CD4-positive, alpha-beta T cell (primary cell): ENCODE measurements at regions of chr16 and their contacts with region 1.

Region 1: GRCh38 chr16:58129097-58129936 is at the start of gene CFAP20:
- DNase-seq: peak; percentile 92 to 98 (median 96)
- ATAC-seq: peak; percentile 84
- H3K4me3 ChIP-seq: peak within 1 kb of the TSS; percentile 99
- H3K4me3 Mint-ChIP-seq: peak within 1 kb of the TSS; percentile 91
- H3K27ac ChIP-seq: peak within 1 kb of the TSS; percentile 84 to 88
- H3K27ac Mint-ChIP-seq: peak within 1 kb of the TSS; percentile 88
- H3K4me1 ChIP-seq: peaks cover 40% of the 10 kb centered on the region
- H3K4me1 Mint-ChIP-seq: peaks cover 47% of the 10 kb centered on the region
- H3K27me3 ChIP-seq: no peaks in the 10 kb centered on the region
- H3K27me3 Mint-ChIP-seq: no peaks in the 10 kb centered on the region
- CTCF ChIP-seq: no peak
- total RNA-seq, gene CFAP20: 250 to 261 TPM

Region 2: DNA sequence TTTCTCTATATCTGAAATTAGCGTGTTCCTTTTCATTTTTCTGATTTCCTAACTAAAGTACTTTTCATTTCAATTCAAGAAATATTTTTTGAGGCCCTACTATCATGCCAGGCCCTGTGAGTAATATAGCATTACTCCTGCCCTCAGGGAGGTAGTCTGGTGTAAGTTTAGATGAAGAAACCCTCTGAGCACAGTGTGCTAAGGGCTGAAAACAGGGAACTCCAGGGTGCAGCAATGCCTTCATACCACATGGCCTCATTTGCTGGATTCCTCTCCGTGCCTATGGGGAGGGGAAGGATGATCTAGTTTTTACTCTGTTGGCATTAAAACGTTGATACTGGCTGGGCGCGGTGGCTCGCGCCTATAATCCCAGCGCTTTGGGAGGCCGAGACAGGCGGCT is 677.3 kb before region 1 on chr16:
- CTCF ChIA-PET with region 1: no interaction called
- POLR2A ChIA-PET with region 1: no interaction called
- intact Hi-C with region 1: no loop called
- DNase-seq: no peak
- ATAC-seq: no peak
- H3K4me3 ChIP-seq: no peak overlapping the region
- H3K4me3 Mint-ChIP-seq: no peak overlapping the region
- H3K27ac ChIP-seq: no peak overlapping the region
- H3K27ac Mint-ChIP-seq: no peak overlapping the region
- H3K4me1 ChIP-seq: peaks cover 10% of the 10 kb centered on the region
- H3K4me1 Mint-ChIP-seq: peaks cover 14% of the 10 kb centered on the region
- H3K27me3 ChIP-seq: no peaks in the 10 kb centered on the region
- H3K27me3 Mint-ChIP-seq: no peaks in the 10 kb centered on the region
- CTCF ChIP-seq: no peak

Region 3: GRCh38 chr16:57899771-57900661 is 229.3 kb before region 1 on chr16:
- CTCF ChIA-PET with region 1: no interaction called
- POLR2A ChIA-PET with region 1: no interaction called
- intact Hi-C with region 1: loop called in 1 of 2 experiments (anchors 2 kb)
- DNase-seq: peak; percentile 62 to 90 (median 78)
- ATAC-seq: peak; percentile 67
- H3K4me3 ChIP-seq: no peak overlapping the region
- H3K4me3 Mint-ChIP-seq: no peak overlapping the region
- H3K27ac ChIP-seq: no peak overlapping the region
- H3K27ac Mint-ChIP-seq: no peak overlapping the region
- H3K4me1 ChIP-seq: peaks cover 4% of the 10 kb centered on the region
- H3K4me1 Mint-ChIP-seq: peaks cover 6% of the 10 kb centered on the region
- H3K27me3 ChIP-seq: peaks cover 0 to 6% of the 10 kb centered on the region in 2 experiments
- H3K27me3 Mint-ChIP-seq: peaks cover 24% of the 10 kb centered on the region
- CTCF ChIP-seq: peak; percentile 83

Region 4: DNA sequence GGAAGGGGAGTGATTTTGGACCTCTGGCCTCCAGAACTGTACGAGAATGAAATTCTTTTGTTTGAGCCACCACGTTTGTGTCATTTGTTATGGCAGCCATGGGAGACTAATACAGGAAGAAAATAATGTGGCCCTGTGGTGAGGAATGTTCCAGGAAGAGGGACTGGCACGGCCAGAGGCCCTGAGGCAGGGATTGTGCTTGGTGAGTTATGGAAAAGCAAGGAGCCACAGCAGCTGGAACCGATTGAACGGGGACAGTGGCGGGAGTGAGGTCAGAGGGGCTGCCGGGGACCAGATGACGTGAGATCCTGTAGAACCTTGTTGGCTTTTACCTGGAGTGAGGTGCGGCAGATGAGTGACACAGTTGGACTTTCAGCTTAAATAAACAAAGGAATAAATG is 51.5 kb before region 1 on chr16:
- CTCF ChIA-PET with region 1: no interaction called
- POLR2A ChIA-PET with region 1: no interaction called
- intact Hi-C with region 1: no loop called
- DNase-seq: no peak
- ATAC-seq: no peak
- H3K4me3 ChIP-seq: no peak overlapping the region
- H3K4me3 Mint-ChIP-seq: no peak overlapping the region
- H3K27ac ChIP-seq: no peak overlapping the region
- H3K27ac Mint-ChIP-seq: no peak overlapping the region
- H3K4me1 ChIP-seq: no peaks in the 10 kb centered on the region
- H3K4me1 Mint-ChIP-seq: no peaks in the 10 kb centered on the region
- H3K27me3 ChIP-seq: no peaks in the 10 kb centered on the region
- H3K27me3 Mint-ChIP-seq: no peaks in the 10 kb centered on the region
- CTCF ChIP-seq: no peak

Region 5: GRCh38 chr16:58098207-58099096 is 30.9 kb before region 1 on chr16:
- CTCF ChIA-PET with region 1: interaction called, 21 read pairs
- POLR2A ChIA-PET with region 1: no interaction called
- intact Hi-C with region 1: no loop called
- DNase-seq: no peak
- ATAC-seq: no peak
- H3K4me3 ChIP-seq: no peak overlapping the region
- H3K4me3 Mint-ChIP-seq: no peak overlapping the region
- H3K27ac ChIP-seq: no peak overlapping the region
- H3K27ac Mint-ChIP-seq: no peak overlapping the region
- H3K4me1 ChIP-seq: no peaks in the 10 kb centered on the region
- H3K4me1 Mint-ChIP-seq: peaks cover 5% of the 10 kb centered on the region
- H3K27me3 ChIP-seq: no peaks in the 10 kb centered on the region
- H3K27me3 Mint-ChIP-seq: peaks cover 7% of the 10 kb centered on the region
- CTCF ChIP-seq: no peak

Region 6: GRCh38 chr16:58249780-58250478 is 120.6 kb after region 1 on chr16:
- CTCF ChIA-PET with region 1: no interaction called
- POLR2A ChIA-PET with region 1: interaction called, 4 read pairs
- intact Hi-C with region 1: loop called in 1 of 2 experiments (anchors 5 kb)
- DNase-seq: peak; percentile 65 to 94 (median 82)
- ATAC-seq: peak; percentile 98
- H3K4me3 ChIP-seq: peak overlapping the region; percentile 73
- H3K4me3 Mint-ChIP-seq: peak overlapping the region; percentile 84
- H3K27ac ChIP-seq: no peak overlapping the region
- H3K27ac Mint-ChIP-seq: no peak overlapping the region
- H3K4me1 ChIP-seq: peaks cover 16% of the 10 kb centered on the region
- H3K4me1 Mint-ChIP-seq: peaks cover 14% of the 10 kb centered on the region
- H3K27me3 ChIP-seq: no peaks in the 10 kb centered on the region
- H3K27me3 Mint-ChIP-seq: peaks cover 8% of the 10 kb centered on the region
- CTCF ChIP-seq: no peak